CD4-positive, alpha-beta T cell (primary cell): ENCODE measurements at regions of chr3 and their contacts with region 1.

Region 1: DNA sequence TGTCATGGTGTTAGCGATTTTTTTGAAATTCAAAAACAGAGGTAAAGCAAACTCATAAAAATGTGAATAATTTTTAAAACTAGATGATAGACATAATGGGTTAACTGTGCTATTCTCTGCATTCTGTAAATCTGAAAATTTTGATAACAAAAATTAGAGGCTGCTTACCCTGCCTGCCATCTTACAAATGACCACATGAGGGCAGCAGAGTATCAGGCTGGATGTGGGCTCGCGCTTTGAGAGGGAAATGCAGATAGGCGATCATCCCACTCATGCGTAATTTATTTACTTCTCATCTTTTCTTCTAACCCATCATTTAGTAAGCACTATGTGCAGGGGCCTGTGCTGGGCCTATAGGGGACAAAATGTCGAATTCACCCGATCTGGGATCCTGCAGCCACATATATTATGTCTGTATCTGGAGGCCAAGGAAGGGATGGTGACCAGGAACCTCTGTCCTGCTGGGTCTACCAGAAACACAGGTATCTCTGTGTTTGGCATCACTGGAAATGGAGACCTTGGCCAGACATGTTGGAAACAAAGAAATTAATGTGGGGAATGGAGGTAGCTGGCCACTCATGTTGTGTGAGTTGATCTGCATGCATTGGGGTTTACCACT is 7.8 kb upstream of the RAD18 start:
- DNase-seq: peak; percentile 58 to 87 (median 69)
- ATAC-seq: peak; percentile 98
- H3K4me3 ChIP-seq: no peak overlapping the region
- H3K4me3 Mint-ChIP-seq: no peak overlapping the region
- H3K27ac ChIP-seq: no peak overlapping the region
- H3K27ac Mint-ChIP-seq: no peak overlapping the region
- H3K4me1 ChIP-seq: peaks cover 4% of the 10 kb centered on the region
- H3K4me1 Mint-ChIP-seq: no peaks in the 10 kb centered on the region
- H3K27me3 ChIP-seq: peaks cover 0 to 4% of the 10 kb centered on the region in 2 experiments
- H3K27me3 Mint-ChIP-seq: peaks cover 35% of the 10 kb centered on the region
- CTCF ChIP-seq: peak; percentile 96

Region 2: DNA sequence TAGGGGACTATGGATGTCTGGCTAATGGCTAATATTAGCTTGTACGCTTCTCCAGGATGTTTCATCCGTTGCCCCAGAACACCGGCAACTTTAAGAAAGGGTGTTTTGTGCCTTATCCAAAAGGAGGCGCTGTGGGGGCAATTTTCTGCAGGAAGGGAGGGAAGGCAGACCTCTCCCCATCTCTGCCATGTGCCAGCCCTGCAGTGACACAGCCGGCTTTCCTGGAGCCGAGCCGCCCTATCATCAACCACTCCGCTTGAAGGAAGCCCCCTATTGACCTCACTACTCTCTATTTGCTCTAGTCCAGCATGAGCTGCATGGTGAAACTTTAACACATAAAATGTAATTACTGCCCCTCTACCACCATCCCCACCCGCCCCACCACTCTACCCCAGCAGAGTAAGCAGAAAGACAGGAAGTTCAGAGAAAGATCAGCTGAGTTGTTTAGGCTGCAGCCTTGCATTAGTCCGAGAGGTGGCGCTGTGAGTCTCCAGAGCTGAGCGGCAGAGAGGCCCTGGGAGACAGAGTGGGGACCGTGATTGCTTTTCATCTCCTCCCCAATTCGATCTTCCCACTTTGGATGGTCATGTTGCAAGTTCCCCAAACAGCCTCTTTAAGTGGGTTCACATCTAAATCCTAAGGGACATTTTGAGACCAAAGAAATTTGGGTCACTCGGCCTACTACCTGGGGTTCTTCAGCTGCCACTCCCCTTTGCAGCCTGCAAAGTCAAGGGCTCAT is 16.7 kb after region 1 on chr3:
- CTCF ChIA-PET with region 1: interaction called, 3 read pairs
- POLR2A ChIA-PET with region 1: no interaction called
- intact Hi-C with region 1: loop called in 1 of 2 experiments (anchors 1 kb)
- DNase-seq: peak in 13 of 14 experiments; percentile 10 to 78 (median 47)
- ATAC-seq: peak; percentile 96
- H3K4me3 ChIP-seq: no peak overlapping the region
- H3K4me3 Mint-ChIP-seq: no peak overlapping the region
- H3K27ac ChIP-seq: no peak overlapping the region
- H3K27ac Mint-ChIP-seq: no peak overlapping the region
- H3K4me1 ChIP-seq: peaks cover 4% of the 10 kb centered on the region
- H3K4me1 Mint-ChIP-seq: peaks cover 5% of the 10 kb centered on the region
- H3K27me3 ChIP-seq: no peaks in the 10 kb centered on the region
- H3K27me3 Mint-ChIP-seq: no peaks in the 10 kb centered on the region
- CTCF ChIP-seq: peak; percentile 58

Region 3: DNA sequence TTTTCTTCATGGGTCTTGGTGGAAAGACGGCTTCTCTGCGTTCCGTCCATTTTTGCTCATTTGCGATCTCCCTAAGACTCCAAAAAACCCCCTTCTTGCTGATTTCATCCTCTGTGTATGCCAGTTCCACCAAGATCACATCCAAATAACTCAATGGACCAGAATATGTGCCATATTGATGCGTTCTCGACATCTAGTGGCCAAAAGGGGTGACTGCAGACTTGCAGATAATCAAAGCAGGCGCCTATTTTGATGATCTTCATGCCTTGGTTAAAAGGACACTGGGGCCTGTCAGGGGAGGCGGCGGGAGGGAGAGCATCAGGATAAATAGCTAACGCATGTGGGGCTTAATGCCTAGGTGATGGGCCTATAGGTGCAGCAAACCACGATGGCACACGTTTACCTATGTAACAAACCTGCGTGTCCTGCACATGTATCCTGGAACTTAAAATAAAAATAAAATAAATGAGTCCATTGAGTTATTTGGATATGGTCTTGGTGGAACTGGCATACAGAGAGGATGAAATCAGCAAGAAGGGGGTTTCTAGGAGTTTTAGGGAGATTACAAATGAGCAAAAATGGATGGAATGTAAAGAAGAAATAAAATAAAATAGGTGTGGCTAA is 96.4 kb after region 1 on chr3:
- CTCF ChIA-PET with region 1: no interaction called
- POLR2A ChIA-PET with region 1: no interaction called
- intact Hi-C with region 1: loop called in 1 of 2 experiments (anchors 1 kb)
- DNase-seq: peak in 4 of 14 experiments; percentile 6 to 29 (median 20)
- ATAC-seq: no peak
- H3K4me3 ChIP-seq: no peak overlapping the region
- H3K4me3 Mint-ChIP-seq: no peak overlapping the region
- H3K27ac ChIP-seq: no peak overlapping the region
- H3K27ac Mint-ChIP-seq: no peak overlapping the region
- H3K4me1 ChIP-seq: no peaks in the 10 kb centered on the region
- H3K4me1 Mint-ChIP-seq: no peaks in the 10 kb centered on the region
- H3K27me3 ChIP-seq: no peaks in the 10 kb centered on the region
- H3K27me3 Mint-ChIP-seq: no peaks in the 10 kb centered on the region
- CTCF ChIP-seq: peak; percentile 50

Region 4: DNA sequence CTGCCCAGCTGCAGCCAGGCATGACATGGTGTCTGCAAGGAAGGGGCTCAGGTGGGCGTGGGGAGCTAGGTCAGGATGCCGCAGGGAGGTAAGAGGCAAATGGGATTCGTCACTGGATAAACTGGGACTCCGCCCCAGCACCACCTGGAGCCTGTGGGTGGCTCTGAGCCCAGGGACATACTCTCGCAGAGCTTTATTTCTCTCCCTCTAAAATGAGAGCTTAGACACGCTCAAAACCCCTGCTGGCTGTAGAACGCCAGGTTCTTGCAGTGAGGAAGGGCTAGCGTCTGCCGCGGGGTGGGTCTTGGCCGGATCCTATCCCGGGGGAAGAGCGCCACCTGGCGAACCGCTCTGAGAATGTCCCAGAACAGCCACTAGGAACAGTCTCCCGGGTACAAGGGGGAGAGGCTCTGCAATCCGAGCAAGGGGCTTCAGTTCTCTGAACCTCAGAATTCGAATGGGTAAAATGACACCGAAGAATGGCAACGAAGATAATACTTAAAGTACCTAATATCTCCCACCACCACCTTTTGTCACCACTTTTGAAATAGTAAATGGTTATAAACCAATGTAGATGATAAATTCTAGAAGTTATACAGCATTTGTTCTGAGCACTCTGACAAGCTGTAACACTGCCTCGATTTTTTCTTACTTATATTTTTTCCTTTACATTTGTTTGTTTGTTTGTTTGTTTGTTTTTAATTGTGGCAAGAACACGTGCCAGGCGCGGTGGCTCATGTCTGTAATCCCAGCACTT is 331.5 kb after region 1 on chr3:
- CTCF ChIA-PET with region 1: interaction called, 26 read pairs
- POLR2A ChIA-PET with region 1: interaction called, 6 read pairs
- intact Hi-C with region 1: loop called (anchors 1 kb)
- DNase-seq: peak; percentile 69 to 89 (median 73)
- ATAC-seq: peak; percentile 99
- H3K4me3 ChIP-seq: peak overlapping the region; percentile 9
- H3K4me3 Mint-ChIP-seq: peak overlapping the region; percentile 3
- H3K27ac ChIP-seq: no peak overlapping the region
- H3K27ac Mint-ChIP-seq: no peak overlapping the region
- H3K4me1 ChIP-seq: peaks cover 6% of the 10 kb centered on the region
- H3K4me1 Mint-ChIP-seq: no peaks in the 10 kb centered on the region
- H3K27me3 ChIP-seq: no peaks in the 10 kb centered on the region
- H3K27me3 Mint-ChIP-seq: peaks cover 29% of the 10 kb centered on the region
- CTCF ChIP-seq: peak; percentile 90

Region 5: GRCh38 chr3:9422712-9423424 is 451.8 kb after region 1 on chr3:
- CTCF ChIA-PET with region 1: no interaction called
- POLR2A ChIA-PET with region 1: no interaction called
- intact Hi-C with region 1: loop called (anchors 2 to 5 kb)
- DNase-seq: peak in 3 of 14 experiments; percentile 55 to 70 (median 64)
- ATAC-seq: peak; percentile 96
- H3K4me3 ChIP-seq: no peak overlapping the region
- H3K4me3 Mint-ChIP-seq: no peak overlapping the region
- H3K27ac ChIP-seq: peak overlapping the region; percentile 3 to 5
- H3K27ac Mint-ChIP-seq: peak overlapping the region; percentile 77
- H3K4me1 ChIP-seq: peaks cover 7% of the 10 kb centered on the region
- H3K4me1 Mint-ChIP-seq: peaks cover 60% of the 10 kb centered on the region
- H3K27me3 ChIP-seq: no peaks in the 10 kb centered on the region
- H3K27me3 Mint-ChIP-seq: no peaks in the 10 kb centered on the region
- CTCF ChIP-seq: peak; percentile 65